ENCODE measurements at regions of chr17 and their contacts with region 1.

Region 1: DNA sequence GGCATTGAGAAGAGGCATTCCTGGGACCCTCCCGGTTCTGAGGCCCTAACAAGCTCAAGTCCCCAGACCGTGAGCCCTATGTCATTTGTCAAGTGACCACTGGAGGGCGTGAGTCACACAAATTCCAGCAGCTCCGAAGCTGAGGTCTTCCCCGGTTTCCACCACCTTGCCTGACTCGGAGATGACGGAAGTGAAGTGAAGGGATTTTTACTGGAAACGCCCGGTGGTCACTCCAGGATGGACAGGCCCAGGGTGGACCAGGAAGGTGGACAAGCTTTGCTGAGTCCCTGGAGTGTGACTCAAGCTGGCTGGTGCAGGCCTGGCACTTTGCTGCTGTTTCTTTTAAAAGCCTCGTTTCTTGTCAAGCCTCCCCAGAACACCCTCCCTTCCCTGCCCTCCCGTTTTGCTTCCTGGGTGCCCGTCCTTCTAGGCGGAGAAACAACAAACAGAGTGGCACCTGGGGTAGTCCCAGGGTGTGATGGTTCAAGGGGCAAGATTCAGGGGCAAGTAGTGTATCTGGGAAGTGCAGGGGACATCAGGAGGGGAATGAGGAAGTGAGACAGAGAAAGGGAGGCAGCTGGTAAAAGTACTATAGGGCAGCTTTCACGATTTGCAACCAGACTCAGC is 5.3 kb upstream of the NOS2 start:
- DNase-seq: peak; percentile 90
- H3K4me3 Mint-ChIP-seq: peak overlapping the region; percentile 66
- H3K27ac Mint-ChIP-seq: peak overlapping the region; percentile 68
- H3K4me1 Mint-ChIP-seq: peaks cover 43% of the 10 kb centered on the region
- H3K27me3 Mint-ChIP-seq: no peaks in the 10 kb centered on the region

Region 2: GRCh38 chr17:27586203-27586721 is 219.4 kb before region 1 on chr17:
- CTCF ChIA-PET with region 1: no interaction called
- POLR2A ChIA-PET with region 1: no interaction called
- intact Hi-C with region 1: no loop called
- DNase-seq: no peak
- H3K4me3 Mint-ChIP-seq: no peak overlapping the region
- H3K27ac Mint-ChIP-seq: no peak overlapping the region
- H3K4me1 Mint-ChIP-seq: peaks cover 3% of the 10 kb centered on the region
- H3K27me3 Mint-ChIP-seq: no peaks in the 10 kb centered on the region

Region 3: GRCh38 chr17:27670791-27671590 is 134.6 kb before region 1 on chr17:
- CTCF ChIA-PET with region 1: no interaction called
- POLR2A ChIA-PET with region 1: no interaction called
- intact Hi-C with region 1: no loop called
- DNase-seq: no peak
- H3K4me3 Mint-ChIP-seq: no peak overlapping the region
- H3K27ac Mint-ChIP-seq: no peak overlapping the region
- H3K4me1 Mint-ChIP-seq: no peaks in the 10 kb centered on the region
- H3K27me3 Mint-ChIP-seq: no peaks in the 10 kb centered on the region

Region 4: DNA sequence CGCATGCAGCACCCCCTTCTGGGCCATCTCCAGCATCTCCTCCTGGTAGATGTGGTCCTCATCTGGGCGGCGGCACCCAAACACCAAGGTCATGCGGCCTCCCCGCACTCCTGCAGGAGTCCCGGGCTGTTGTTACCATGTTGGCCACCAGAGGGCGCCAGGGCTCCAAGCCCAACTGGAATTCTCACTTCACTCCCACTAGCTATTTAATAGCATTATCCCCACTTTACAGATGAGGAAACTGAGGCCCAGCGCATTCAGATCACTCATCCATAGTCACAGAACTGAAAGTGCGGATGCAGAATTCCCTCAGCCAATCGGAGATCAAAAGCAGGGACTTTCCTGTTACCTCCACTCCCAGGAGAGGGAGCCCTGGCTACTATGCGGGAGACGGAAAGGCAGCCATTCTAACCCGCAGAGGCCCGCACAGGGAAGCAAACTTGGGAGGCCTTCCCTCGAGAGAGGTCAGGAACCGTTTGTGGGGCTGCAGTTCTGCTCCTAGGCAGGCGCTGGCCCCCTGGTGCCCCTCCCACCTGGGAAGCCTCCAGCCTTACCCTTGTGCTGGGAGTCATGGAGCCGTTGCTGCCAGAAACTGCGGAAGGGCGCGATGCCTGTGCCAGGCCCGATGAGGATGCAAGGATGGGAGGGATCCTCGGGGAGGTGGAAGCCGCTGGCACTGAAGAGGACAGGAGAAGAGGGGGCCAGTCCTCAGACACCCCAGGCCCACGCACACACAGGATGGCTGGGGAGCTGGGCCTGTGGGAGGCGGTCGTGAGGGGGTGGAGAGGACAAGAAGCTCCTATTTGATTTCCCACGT is 45.4 kb before region 1 on chr17:
- CTCF ChIA-PET with region 1: interaction called, 17 read pairs
- POLR2A ChIA-PET with region 1: no interaction called
- intact Hi-C with region 1: no loop called
- DNase-seq: peak; percentile 80
- H3K4me3 Mint-ChIP-seq: no peak overlapping the region
- H3K27ac Mint-ChIP-seq: no peak overlapping the region
- H3K4me1 Mint-ChIP-seq: no peaks in the 10 kb centered on the region
- H3K27me3 Mint-ChIP-seq: no peaks in the 10 kb centered on the region

Region 5: DNA sequence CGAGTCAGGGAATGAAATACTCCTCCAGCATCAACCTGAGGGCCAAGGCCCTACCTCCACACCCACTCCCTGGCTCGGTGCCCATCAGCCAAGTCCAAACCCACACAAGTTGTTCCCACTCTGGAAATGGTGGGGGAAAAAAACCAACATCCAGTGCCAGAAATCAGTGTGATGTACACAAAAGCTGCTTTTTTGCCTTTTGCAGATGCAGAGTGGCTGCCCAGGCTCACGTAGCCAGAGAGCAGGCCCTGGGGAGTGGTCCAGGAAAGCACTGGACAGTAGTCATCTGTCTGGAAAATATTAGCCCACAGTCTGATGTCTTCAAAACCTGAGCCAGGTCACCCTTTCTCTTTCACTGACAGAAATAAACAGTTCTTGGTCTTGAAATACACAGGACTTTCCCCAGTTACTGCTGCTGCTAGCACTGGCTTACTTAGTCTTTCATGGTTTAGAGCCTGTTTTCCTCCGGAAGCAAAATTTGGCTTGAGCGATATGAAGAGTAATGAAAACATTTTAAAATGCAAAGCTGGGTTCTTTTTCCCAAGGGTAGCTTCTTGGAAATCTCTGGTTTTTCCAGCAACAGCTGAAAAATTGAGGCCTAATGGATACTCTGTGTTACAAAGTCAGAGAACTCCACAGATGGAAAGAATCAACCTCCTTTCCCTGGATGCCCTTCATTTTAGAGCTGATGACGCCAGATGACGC is 12.9 kb after region 1 on chr17:
- CTCF ChIA-PET with region 1: interaction called, 16 read pairs
- POLR2A ChIA-PET with region 1: no interaction called
- intact Hi-C with region 1: no loop called
- DNase-seq: no peak
- H3K4me3 Mint-ChIP-seq: no peak overlapping the region
- H3K27ac Mint-ChIP-seq: no peak overlapping the region
- H3K4me1 Mint-ChIP-seq: no peaks in the 10 kb centered on the region
- H3K27me3 Mint-ChIP-seq: no peaks in the 10 kb centered on the region

Region 6: DNA sequence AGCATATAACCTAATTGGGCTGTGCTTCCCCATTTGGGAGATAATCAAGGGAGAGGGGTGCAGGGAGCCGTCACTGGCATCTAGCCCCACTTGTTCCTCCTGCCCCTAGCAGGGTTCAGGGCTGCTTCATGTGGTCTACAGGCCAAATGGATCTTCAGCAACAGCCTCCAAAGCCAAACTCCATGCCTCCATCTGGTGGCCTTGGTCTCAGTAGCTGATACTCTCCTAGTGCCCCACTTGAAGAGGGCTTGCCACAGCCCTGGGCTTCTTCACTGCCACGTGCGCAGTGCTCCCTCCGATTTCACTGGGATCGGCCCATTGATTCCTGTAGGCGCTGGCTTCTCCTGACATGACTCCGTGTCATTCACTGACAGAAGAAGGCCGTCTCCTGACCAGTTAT is 62.9 kb after region 1 on chr17:
- CTCF ChIA-PET with region 1: interaction called, 554 read pairs
- POLR2A ChIA-PET with region 1: no interaction called
- intact Hi-C with region 1: no loop called
- DNase-seq: no peak
- H3K4me3 Mint-ChIP-seq: no peak overlapping the region
- H3K27ac Mint-ChIP-seq: no peak overlapping the region
- H3K4me1 Mint-ChIP-seq: no peaks in the 10 kb centered on the region
- H3K27me3 Mint-ChIP-seq: no peaks in the 10 kb centered on the region

Region 7: DNA sequence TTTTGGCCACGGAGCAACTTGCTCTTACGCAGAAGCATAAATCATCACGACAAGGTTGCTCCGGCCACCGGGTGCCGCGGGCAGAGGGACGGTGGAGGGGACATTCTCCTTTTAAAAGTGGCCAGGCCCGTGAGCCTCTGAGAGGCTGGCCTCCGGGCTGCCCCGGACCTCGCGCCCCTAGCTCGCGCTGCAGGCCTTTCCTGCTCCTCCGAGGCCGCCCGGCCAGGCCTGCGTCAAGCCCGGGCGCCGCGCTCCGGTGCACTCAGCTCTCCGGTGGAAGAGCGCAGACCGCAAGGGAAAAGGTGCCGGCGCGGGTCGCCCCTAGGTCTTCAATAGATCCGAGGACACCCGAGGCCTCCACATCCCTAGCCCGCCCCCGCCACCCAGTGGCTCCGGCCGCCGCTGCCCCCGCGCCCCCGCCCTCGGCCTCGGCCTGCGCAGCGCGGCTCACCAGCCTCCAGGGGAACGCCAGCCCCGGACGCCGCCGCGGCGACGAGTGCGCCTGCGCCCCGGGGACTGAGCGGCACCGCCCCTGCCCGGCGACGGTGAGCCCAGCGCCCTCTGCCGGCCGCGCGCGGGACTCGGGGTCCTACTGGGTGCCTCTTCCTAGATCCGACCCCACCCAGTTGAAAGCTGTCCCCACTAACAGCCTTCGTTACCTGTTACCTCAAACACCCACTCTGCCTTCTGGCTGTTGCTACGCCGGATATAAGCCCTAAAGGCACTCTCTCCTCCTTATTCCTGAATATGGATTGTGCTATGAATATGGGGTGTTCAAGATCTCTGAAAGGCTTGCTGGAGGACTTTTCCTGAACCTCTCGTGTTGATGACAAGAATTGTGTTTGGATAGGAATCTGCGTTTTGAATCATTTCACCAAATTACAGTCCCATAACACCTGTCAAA is 87.5 kb after region 1 on chr17 and contains the start of gene LYRM9:
- CTCF ChIA-PET with region 1: interaction called, 152 read pairs
- POLR2A ChIA-PET with region 1: interaction called, 13 read pairs
- intact Hi-C with region 1: loop called (anchors 1 kb)
- DNase-seq: peak; percentile 93
- H3K4me3 Mint-ChIP-seq: peak within 1 kb of the TSS; percentile 74
- H3K27ac Mint-ChIP-seq: peak within 1 kb of the TSS; percentile 36
- H3K4me1 Mint-ChIP-seq: peaks cover 12% of the 10 kb centered on the region
- H3K27me3 Mint-ChIP-seq: peaks cover 14% of the 10 kb centered on the region
- total RNA-seq, gene LYRM9: 5.7 to 6.8 TPM

Region 8: GRCh38 chr17:27915709-27916108 is 110.1 kb after region 1 on chr17:
- CTCF ChIA-PET with region 1: no interaction called
- POLR2A ChIA-PET with region 1: no interaction called
- intact Hi-C with region 1: no loop called
- DNase-seq: no peak
- H3K4me3 Mint-ChIP-seq: no peak overlapping the region
- H3K27ac Mint-ChIP-seq: no peak overlapping the region
- H3K4me1 Mint-ChIP-seq: no peaks in the 10 kb centered on the region
- H3K27me3 Mint-ChIP-seq: peaks cover 4% of the 10 kb centered on the region

Region 9: GRCh38 chr17:28252436-28252835 is 446.8 kb after region 1 on chr17:
- CTCF ChIA-PET with region 1: interaction called, 42 read pairs
- POLR2A ChIA-PET with region 1: no interaction called
- intact Hi-C with region 1: loop called (anchors 5 kb)
- DNase-seq: no peak
- H3K4me3 Mint-ChIP-seq: no peak overlapping the region
- H3K27ac Mint-ChIP-seq: no peak overlapping the region
- H3K4me1 Mint-ChIP-seq: peaks cover 8% of the 10 kb centered on the region
- H3K27me3 Mint-ChIP-seq: peaks cover 7% of the 10 kb centered on the region

Measured in activated CD4-positive, alpha-beta memory T cell treated with anti-CD3 and anti-CD28 coated beads for 36 hours (primary cell).